Heart right ventricle (tissue), 16 donors: ENCODE measurements at regions of chr7 and their contacts with region 1.

Region 1: DNA sequence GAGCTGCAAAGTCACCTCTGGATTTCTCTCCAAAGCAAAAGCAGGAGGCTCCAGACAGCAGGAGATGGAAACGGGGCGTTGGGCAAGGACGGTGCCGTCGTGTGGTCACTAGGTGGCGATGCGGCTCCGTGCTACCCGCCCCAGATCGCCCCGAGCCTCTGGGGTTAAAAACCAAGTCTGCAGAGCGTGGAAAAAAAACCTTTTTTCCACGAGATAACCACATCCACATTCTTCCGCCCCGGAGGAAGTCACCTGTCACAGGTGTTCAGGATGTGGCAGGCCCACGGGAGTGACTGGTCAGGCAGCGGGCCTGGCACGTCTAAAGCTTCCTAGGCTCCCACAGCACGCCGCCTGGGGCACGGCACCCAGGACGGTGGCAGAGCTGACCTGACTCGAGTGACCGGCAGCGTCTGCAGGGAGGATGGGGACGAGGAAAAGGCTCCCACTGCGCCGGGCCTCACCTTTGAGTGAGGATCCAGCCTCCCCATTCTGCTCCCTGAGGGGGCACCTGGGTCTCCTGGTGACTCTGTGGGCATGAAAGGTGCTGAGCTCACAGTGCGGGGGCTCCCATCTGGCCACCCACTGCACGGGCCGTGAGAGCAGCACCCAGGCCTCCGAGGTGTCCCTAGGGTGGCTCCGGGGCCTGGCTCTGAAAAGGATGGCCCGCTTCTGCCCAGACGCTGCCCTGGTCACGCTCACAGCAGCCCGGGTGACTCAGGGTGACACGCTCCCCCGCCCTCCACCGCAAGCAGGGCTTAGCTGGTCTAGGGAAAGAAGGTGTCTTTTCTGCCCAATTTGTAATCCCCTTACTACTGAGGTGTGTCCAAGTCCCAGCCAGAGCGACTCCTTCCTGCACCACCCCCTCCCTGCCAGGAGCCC is 71.3 kb upstream of the TNRC18 start:
- DNase-seq: peak; percentile 71 to 81
- ATAC-seq: peak; percentile 69 to 90 (median 82)
- H3K4me3 ChIP-seq: peak overlapping the region in 8 of 10 donors; percentile 1 to 41 (median 26)
- H3K27ac ChIP-seq: peak overlapping the region in 9 of 10 donors; percentile 32 to 90 (median 68)
- H3K4me1 ChIP-seq: peaks cover 15 to 40% (median 33%) of the 10 kb centered on the region in 9 donors
- H3K27me3 ChIP-seq: no peaks in the 10 kb centered on the region
- CTCF ChIP-seq: peak; percentile 92 to 99 (median 98)

Region 2: DNA sequence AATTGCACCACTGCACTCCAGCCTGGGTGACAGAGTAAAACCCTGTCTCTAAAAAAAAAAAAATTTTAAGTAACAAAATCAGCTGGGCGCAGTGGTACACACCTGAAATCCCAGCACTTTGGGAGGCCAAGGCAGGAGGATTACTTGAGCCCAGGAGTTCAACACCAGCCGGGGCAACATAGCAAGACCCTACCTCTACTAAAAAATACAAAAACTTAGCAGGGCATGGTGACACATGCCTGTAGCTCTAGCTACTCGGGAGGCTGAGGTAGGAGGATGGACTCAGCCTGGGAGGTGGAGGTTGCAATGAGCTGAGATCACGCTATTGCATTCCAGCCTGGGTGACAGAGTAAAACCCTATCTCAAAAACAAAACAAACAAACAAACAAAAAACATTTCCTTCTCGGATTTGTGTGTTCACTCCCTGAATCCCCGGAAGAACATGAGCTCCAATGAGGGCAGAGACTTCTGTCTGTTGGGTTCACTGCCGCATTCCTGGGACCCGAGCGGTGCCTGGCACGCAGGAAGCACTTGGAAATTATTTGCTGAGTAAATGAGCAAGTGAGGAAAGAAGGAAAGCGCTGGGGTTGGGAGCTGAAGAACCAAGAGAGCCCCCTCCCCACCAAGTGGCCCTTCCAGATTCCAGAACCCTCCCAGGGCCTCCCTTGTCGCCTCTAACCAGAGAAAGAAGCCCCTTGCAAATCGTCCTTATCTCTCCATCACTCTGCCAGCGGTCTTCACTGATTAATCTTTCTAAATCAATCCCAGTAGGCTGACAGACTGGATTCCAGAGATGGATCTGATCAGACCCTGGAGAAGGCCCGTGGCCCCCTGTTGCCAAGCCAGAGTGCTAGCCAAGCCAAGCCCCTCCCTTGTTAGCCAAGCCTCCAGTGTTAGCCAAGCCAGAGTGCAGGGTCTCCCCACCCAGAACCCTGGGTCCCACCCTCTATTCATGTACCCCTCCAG is 77.5 kb before region 1 on chr7:
- intact Hi-C with region 1: no loop called
- DNase-seq: no peak
- ATAC-seq: no peak
- H3K4me3 ChIP-seq: peak overlapping the region in 1 of 10 donors; percentile 88
- H3K27ac ChIP-seq: peak overlapping the region in 5 of 10 donors; percentile 78 to 100 (median 99)
- H3K4me1 ChIP-seq: peaks cover 11 to 48% (median 21%) of the 10 kb centered on the region in 9 donors
- H3K27me3 ChIP-seq: peaks cover 0 to 11% (median 0%) of the 10 kb centered on the region in 7 donors
- CTCF ChIP-seq: no peak

Region 3: GRCh38 chr7:5525271-5526099 is 30.6 kb after region 1 on chr7:
- intact Hi-C with region 1: loop called in 1 of 10 experiments (anchors 1 kb)
- DNase-seq: no peak
- ATAC-seq: peak in 3 of 8 donors; percentile 0 to 5 (median 0)
- H3K4me3 ChIP-seq: peak overlapping the region in 1 of 10 donors; percentile 98
- H3K27ac ChIP-seq: peak overlapping the region in 7 of 10 donors; percentile 41 to 100 (median 100)
- H3K4me1 ChIP-seq: peaks cover 0 to 28% (median 23%) of the 10 kb centered on the region in 9 donors
- H3K27me3 ChIP-seq: no peaks in the 10 kb centered on the region
- CTCF ChIP-seq: no peak

Region 4: GRCh38 chr7:5557920-5558401 is 63.0 kb after region 1 on chr7:
- intact Hi-C with region 1: loop called in 8 of 10 experiments (anchors 1 to 2 kb)
- DNase-seq: peak; percentile 65 to 76
- ATAC-seq: peak; percentile 13 to 57 (median 42)
- H3K4me3 ChIP-seq: peak overlapping the region in 7 of 10 donors; percentile 21 to 72 (median 31)
- H3K27ac ChIP-seq: peak overlapping the region; percentile 90 to 100 (median 100)
- H3K4me1 ChIP-seq: peaks cover 30 to 69% (median 61%) of the 10 kb centered on the region in 9 donors
- H3K27me3 ChIP-seq: no peaks in the 10 kb centered on the region
- CTCF ChIP-seq: no peak

Region 5: DNA sequence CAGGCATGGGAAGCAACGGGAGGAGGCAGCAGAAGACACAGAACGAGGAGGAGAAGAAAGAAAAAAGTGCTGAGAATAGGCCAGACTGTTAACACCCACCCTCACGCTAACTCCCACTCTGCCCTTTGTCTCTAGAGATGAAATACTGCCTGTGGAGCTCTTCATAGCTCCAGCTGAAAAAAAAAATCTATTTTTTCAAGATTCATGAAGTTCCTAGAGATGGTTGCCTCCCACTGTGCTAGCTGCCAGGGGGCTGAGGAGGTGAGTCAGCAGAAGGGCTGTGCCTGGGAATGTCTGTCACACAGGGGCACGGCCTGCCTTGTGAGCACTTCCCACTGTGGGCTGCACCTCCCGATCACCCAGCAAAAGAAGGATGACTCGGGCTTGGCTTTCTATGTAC is 142.0 kb after region 1 on chr7:
- intact Hi-C with region 1: no loop called
- DNase-seq: peak; percentile 52 to 54
- ATAC-seq: peak; percentile 56 to 85 (median 66)
- H3K4me3 ChIP-seq: peak overlapping the region in 1 of 10 donors; percentile 8
- H3K27ac ChIP-seq: peak overlapping the region in 8 of 10 donors; percentile 29 to 74 (median 58)
- H3K4me1 ChIP-seq: peaks cover 17 to 58% (median 52%) of the 10 kb centered on the region in 9 donors
- H3K27me3 ChIP-seq: no peaks in the 10 kb centered on the region
- CTCF ChIP-seq: no peak

Region 6: GRCh38 chr7:5665094-5666025 is 170.4 kb after region 1 on chr7:
- intact Hi-C with region 1: loop called in 5 of 10 experiments (anchors 1 to 10 kb)
- DNase-seq: peak in 1 of 2 donors; percentile 84
- ATAC-seq: peak; percentile 42 to 86 (median 76)
- H3K4me3 ChIP-seq: no peak overlapping the region
- H3K27ac ChIP-seq: no peak overlapping the region
- H3K4me1 ChIP-seq: peaks cover 4 to 62% (median 33%) of the 10 kb centered on the region in 9 donors
- H3K27me3 ChIP-seq: no peaks in the 10 kb centered on the region
- CTCF ChIP-seq: peak; percentile 75 to 91 (median 85)

Region 7: GRCh38 chr7:5677538-5678294 is 182.8 kb after region 1 on chr7:
- intact Hi-C with region 1: loop called in 7 of 10 experiments (anchors 5 to 10 kb)
- DNase-seq: peak; percentile 63 to 76
- ATAC-seq: peak; percentile 77 to 91 (median 82)
- H3K4me3 ChIP-seq: peak overlapping the region in 1 of 10 donors; percentile 7
- H3K27ac ChIP-seq: peak overlapping the region in 8 of 10 donors; percentile 15 to 64 (median 52)
- H3K4me1 ChIP-seq: peaks cover 14 to 74% (median 63%) of the 10 kb centered on the region in 9 donors
- H3K27me3 ChIP-seq: no peaks in the 10 kb centered on the region
- CTCF ChIP-seq: peak; percentile 59 to 84 (median 77)

Region 8: DNA sequence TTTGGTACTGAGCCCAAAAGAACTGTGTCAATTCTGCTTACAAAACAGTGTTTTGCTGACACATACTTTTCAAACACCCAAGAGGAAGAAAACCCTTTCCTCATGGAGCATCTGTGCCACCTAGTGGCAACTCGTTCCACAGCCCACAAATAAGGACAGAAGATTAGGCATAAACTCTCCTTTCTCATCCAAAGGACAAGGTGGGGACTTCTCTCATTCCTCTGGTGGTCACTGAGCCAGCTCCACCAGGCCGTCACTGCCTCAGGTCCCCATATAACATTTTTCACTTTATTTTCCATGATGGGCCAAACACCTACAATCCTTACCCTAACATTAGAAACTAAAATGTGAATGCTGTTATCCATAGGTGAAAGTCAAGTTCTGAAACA is 209.6 kb after region 1 on chr7:
- intact Hi-C with region 1: loop called in 9 of 10 experiments (anchors 1 to 10 kb)
- DNase-seq: peak; percentile 61 to 85
- ATAC-seq: peak; percentile 31 to 83 (median 73)
- H3K4me3 ChIP-seq: no peak overlapping the region
- H3K27ac ChIP-seq: peak overlapping the region in 4 of 10 donors; percentile 43 to 66 (median 59)
- H3K4me1 ChIP-seq: peaks cover 0 to 51% (median 28%) of the 10 kb centered on the region in 9 donors
- H3K27me3 ChIP-seq: no peaks in the 10 kb centered on the region
- CTCF ChIP-seq: peak; percentile 85 to 97 (median 90)